ENCODE measurements at regions of chr12 and their contacts with region 1.

Region 1: GRCh38 chr12:69359531-69360347 is at the start of gene YEATS4:
- DNase-seq: peak; percentile 93
- H3K4me3 ChIP-seq: peak within 1 kb of the TSS; percentile 83 to 96 (median 88)
- H3K27ac ChIP-seq: peak within 1 kb of the TSS; percentile 97 to 99 (median 98)
- H3K4me1 ChIP-seq: peaks cover 0 to 19% (median 17%) of the 10 kb centered on the region in 4 donors
- H3K27me3 ChIP-seq: no peaks in the 10 kb centered on the region
- CTCF ChIP-seq: no peak
- EP300 ChIP-seq: no peak
- POLR2A ChIP-seq: peak; percentile 31 to 43
- total RNA-seq, gene YEATS4: 13.3 to 61.2 (median 29.7) TPM

Region 2: DNA sequence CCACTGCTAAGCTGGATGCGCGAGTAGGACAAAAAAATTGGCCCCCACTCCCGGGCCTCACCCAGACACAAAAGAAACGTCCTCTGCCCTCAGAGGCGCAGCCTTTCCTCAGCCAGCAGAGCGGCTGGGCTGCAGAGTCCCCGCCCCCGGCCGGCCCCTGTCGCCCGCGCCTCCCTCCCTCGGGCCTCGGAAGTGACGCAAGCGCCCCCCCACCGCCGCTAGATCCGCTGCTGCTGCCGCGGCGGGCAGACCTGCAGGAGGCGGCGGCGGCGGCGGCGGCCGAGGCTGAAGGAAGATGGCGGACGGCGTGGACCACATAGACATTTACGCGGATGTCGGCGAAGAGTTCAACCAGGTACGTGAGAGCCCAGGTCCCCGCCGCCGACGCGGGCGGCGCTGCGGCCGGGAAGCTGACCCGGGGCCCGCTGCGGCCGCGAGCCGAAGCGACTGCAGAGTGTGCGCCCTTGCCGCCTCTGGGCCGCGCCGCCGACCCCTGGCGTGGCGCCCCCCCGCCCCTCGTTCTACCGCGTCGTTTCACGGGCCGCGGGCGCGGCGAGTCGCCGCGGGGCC is 120.3 kb before region 1 on chr12 and contains the start of gene CPSF6:
- intact Hi-C with region 1: loop called (anchors 5 kb)
- DNase-seq: peak; percentile 97
- H3K4me3 ChIP-seq: peak within 1 kb of the TSS; percentile 54 to 94 (median 90)
- H3K27ac ChIP-seq: peak within 1 kb of the TSS; percentile 89 to 97 (median 95)
- H3K4me1 ChIP-seq: peaks cover 0 to 49% (median 43%) of the 10 kb centered on the region in 4 donors
- H3K27me3 ChIP-seq: no peaks in the 10 kb centered on the region
- CTCF ChIP-seq: no peak
- EP300 ChIP-seq: no peak
- POLR2A ChIP-seq: peak; percentile 72 to 79
- total RNA-seq, gene CPSF6: 33.5 to 96.0 (median 34.8) TPM

Region 3: GRCh38 chr12:69330475-69331473 is 29.0 kb before region 1 on chr12:
- intact Hi-C with region 1: no loop called
- DNase-seq: no peak
- H3K4me3 ChIP-seq: peak overlapping the region; percentile 6 to 46 (median 44)
- H3K27ac ChIP-seq: peak overlapping the region in 2 of 4 donors; percentile 27 to 42
- H3K4me1 ChIP-seq: peaks cover 0 to 11% (median 2%) of the 10 kb centered on the region in 4 donors
- H3K27me3 ChIP-seq: peaks cover 0 to 7% (median 0%) of the 10 kb centered on the region in 3 donors
- CTCF ChIP-seq: no peak
- EP300 ChIP-seq: no peak
- POLR2A ChIP-seq: no peak

Region 4: DNA sequence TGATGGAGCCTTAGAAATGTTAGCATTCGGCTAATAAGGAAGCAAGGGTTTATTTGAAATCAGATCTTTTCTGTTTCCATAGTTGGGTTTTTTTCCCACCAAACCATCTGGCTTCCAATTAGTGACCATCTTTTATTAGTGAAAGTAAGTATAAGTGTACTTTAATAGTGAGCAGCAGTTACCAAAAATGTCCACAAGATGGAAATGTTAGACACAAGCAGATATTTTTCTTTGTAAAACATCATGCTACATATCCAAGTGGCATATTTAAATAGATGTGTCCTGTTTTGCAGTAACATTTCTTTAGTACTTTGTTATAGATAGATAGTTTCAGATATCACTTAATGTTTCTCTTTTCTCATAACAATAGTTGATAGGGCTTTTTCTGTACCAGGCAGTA is 28.6 kb after region 1 on chr12:
- intact Hi-C with region 1: no loop called
- DNase-seq: no peak
- H3K4me3 ChIP-seq: no peak overlapping the region
- H3K27ac ChIP-seq: no peak overlapping the region
- H3K4me1 ChIP-seq: no peaks in the 10 kb centered on the region
- H3K27me3 ChIP-seq: no peaks in the 10 kb centered on the region
- CTCF ChIP-seq: peak in 3 of 4 experiments; percentile 14 to 35 (median 33)
- EP300 ChIP-seq: no peak
- POLR2A ChIP-seq: no peak

Region 5: DNA sequence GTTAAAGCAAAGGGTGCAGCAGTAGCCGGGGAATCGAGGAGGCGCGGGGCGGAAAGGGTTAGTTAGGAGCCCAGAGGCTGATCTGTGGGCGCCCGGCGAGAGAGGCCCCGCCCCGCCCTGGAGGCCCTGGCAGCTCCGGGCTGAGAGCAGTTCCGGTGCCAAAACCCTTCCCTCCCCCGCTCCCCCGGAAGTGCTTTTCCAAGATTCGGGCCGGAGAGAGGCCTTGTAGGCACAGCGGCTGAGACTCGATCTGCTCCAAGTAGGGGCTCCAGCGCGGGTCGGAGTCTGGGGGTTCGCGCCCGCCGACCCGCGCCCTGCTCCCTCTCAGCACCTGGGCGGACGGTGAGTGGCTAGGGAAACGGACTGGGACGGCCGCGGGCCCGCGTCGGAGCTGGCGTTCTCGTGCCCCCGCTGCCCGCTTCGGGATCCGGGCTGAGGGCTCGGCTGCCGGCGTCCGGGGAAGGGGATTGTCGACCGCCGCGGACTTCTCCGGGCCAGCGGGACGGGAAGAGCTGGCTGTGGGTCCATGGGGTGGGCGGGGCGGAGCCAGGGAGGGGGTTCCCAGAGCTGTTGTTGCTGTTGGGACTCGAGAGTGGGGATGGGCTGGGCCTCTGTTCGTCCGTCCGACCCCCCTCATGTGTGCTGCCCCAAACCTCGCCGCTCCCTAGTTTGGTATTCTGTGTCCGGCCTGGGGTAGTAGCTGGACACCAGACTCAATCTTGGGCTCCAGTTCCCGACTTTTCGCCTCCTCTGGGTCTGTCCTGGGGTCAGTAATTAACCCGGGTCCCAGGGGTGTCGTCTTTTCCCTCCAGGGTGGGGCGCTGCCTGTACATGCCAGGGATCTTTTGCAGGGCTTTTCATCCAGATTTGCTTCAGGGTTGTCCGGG is 110.7 kb after region 1 on chr12 and contains the start of gene FRS2:
- intact Hi-C with region 1: loop called (anchors 5 kb)
- DNase-seq: peak; percentile 95
- H3K4me3 ChIP-seq: peak within 1 kb of the TSS; percentile 91 to 99 (median 98)
- H3K27ac ChIP-seq: peak within 1 kb of the TSS; percentile 91 to 97 (median 96)
- H3K4me1 ChIP-seq: peaks cover 0 to 51% (median 45%) of the 10 kb centered on the region in 4 donors
- H3K27me3 ChIP-seq: no peaks in the 10 kb centered on the region
- CTCF ChIP-seq: peak in 2 of 4 experiments; percentile 6 to 25
- EP300 ChIP-seq: peak in 1 of 4 donors; percentile 32
- POLR2A ChIP-seq: peak; percentile 80 to 86
- total RNA-seq, gene FRS2: 33.8 to 48.4 (median 40.3) TPM

Region 6: GRCh38 chr12:69570545-69571399 is 211.0 kb after region 1 on chr12:
- intact Hi-C with region 1: loop called (anchors 5 kb)
- DNase-seq: peak; percentile 68
- H3K4me3 ChIP-seq: no peak overlapping the region
- H3K27ac ChIP-seq: no peak overlapping the region
- H3K4me1 ChIP-seq: no peaks in the 10 kb centered on the region
- H3K27me3 ChIP-seq: no peaks in the 10 kb centered on the region
- CTCF ChIP-seq: peak; percentile 47 to 77 (median 68)
- EP300 ChIP-seq: no peak
- POLR2A ChIP-seq: no peak

Region 7: DNA sequence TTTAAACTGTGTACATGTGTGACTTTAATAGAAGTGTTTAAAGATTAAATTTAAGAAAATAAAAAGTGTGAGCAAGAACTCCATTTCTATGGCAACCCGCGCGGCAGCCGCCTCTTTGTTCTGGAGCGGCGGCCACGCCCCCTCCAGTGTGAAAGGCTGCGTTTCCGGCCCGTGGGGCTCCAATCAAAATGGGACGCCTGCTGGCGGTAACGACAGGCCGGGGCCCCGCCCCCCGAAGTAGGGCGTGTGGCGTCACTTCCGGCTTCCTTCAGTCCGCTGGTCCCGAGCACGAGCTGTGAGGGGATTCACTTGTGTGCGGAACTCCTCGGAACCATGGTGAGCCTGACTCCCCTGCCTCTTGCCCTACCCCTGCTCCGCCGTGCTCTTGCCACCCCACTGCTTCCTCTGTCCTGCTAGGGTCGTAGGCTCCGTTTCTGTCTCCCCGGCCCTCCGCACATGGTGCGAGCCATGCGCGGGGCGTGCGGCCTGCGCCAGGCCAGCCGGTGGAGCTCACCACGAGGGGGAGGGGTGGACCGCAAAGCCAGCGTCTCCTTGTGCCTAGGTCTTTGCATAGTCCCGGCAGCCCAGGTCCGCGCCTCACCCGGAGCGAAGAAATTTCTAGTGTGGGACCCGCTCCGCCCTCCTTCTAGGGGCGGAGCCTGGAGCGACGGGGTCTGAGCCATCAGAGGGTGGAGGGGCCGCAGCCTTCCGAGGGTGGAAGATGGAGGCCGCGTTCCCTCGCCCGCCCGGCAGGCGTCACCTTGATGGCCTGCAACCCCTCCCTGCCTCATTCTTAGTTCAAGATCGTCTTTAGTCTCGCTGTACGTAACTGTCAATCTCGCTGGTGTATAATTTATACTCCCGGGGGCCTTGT is 225.7 kb after region 1 on chr12 and contains the start of gene CCT2:
- intact Hi-C with region 1: loop called (anchors 5 kb)
- DNase-seq: peak; percentile 98
- H3K4me3 ChIP-seq: peak within 1 kb of the TSS; percentile 70 to 98 (median 82)
- H3K27ac ChIP-seq: peak within 1 kb of the TSS; percentile 85 to 91 (median 87)
- H3K4me1 ChIP-seq: peaks cover 0 to 12% (median 10%) of the 10 kb centered on the region in 4 donors
- H3K27me3 ChIP-seq: no peaks in the 10 kb centered on the region
- CTCF ChIP-seq: peak in 1 of 4 experiments; percentile 29
- EP300 ChIP-seq: no peak
- POLR2A ChIP-seq: peak; percentile 63 to 64
- total RNA-seq, gene CCT2: 87.0 to 126 (median 116) TPM

Region 8: GRCh38 chr12:69639400-69640016 is 279.8 kb after region 1 on chr12:
- intact Hi-C with region 1: loop called (anchors 2 kb)
- DNase-seq: peak; percentile 70
- H3K4me3 ChIP-seq: no peak overlapping the region
- H3K27ac ChIP-seq: no peak overlapping the region
- H3K4me1 ChIP-seq: no peaks in the 10 kb centered on the region
- H3K27me3 ChIP-seq: no peaks in the 10 kb centered on the region
- CTCF ChIP-seq: peak; percentile 20 to 70 (median 53)
- EP300 ChIP-seq: no peak
- POLR2A ChIP-seq: no peak

Region 9: GRCh38 chr12:70214972-70215617 is 855.4 kb after region 1 on chr12:
- intact Hi-C with region 1: no loop called
- DNase-seq: no peak
- H3K4me3 ChIP-seq: no peak overlapping the region
- H3K27ac ChIP-seq: no peak overlapping the region
- H3K4me1 ChIP-seq: no peaks in the 10 kb centered on the region
- H3K27me3 ChIP-seq: no peaks in the 10 kb centered on the region
- CTCF ChIP-seq: no peak
- EP300 ChIP-seq: no peak
- POLR2A ChIP-seq: no peak

Measured in sigmoid colon (tissue), 7 donors.